PC-9 (cell line): ENCODE measurements at regions of chr17 and their contacts with region 1.

Region 1: DNA sequence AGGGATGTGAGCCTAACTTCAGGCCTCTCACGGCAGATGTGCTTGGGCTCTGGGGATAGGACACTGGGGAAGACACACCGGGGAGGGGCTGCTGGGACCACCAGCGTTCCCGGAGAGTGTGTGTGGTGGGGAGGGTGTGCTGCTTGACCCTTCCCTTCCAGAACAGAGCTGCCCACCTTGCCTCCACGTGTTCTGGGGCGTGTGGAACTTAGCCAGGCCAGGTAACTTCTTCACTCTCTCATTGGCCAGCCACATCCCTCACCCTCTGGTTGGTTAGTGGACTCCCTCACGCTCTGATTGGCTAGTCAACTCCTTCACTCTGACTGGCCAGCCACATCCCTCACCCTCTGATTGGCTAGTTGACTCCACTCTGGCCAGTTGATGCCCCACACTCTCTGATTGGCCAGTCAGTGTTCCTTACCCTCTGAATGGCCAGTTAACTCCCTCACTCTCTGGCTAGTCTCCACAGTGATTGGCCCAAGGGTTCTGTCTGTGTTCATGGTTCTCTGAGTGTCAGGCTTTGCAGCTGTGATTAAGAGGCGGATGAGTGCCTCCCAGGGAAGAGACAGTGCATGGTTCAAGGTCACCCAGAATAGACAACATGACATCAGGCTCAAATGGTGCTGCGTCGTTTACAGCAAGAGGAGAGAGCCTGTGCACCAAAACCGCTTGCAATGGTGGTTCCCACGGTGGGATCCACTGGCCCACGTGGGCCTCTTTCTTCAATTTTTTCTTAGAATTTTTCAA is 10.0 kb downstream of the TMEM235 start:
- DNase-seq: no peak
- H3K4me3 ChIP-seq: no peak overlapping the region
- H3K27ac ChIP-seq: no peak overlapping the region
- H3K4me1 ChIP-seq: no peaks in the 10 kb centered on the region
- H3K27me3 ChIP-seq: no peaks in the 10 kb centered on the region
- CTCF ChIP-seq: no peak

Region 2: GRCh38 chr17:78154903-78155811 is 86.3 kb before region 1 on chr17:
- CTCF ChIA-PET with region 1: no interaction called
- POLR2A ChIA-PET with region 1: no interaction called
- intact Hi-C with region 1: no loop called
- DNase-seq: no peak
- H3K4me3 ChIP-seq: no peak overlapping the region
- H3K27ac ChIP-seq: no peak overlapping the region
- H3K4me1 ChIP-seq: no peaks in the 10 kb centered on the region
- H3K27me3 ChIP-seq: no peaks in the 10 kb centered on the region
- CTCF ChIP-seq: no peak

Region 3: GRCh38 chr17:78202666-78203065 is 38.8 kb before region 1 on chr17:
- CTCF ChIA-PET with region 1: interaction called, 13 read pairs
- POLR2A ChIA-PET with region 1: no interaction called
- intact Hi-C with region 1: no loop called
- DNase-seq: no peak
- H3K4me3 ChIP-seq: no peak overlapping the region
- H3K27ac ChIP-seq: no peak overlapping the region
- H3K4me1 ChIP-seq: no peaks in the 10 kb centered on the region; the same call in 1 of the 2 replicates
- H3K27me3 ChIP-seq: no peaks in the 10 kb centered on the region
- CTCF ChIP-seq: no peak

Region 4: DNA sequence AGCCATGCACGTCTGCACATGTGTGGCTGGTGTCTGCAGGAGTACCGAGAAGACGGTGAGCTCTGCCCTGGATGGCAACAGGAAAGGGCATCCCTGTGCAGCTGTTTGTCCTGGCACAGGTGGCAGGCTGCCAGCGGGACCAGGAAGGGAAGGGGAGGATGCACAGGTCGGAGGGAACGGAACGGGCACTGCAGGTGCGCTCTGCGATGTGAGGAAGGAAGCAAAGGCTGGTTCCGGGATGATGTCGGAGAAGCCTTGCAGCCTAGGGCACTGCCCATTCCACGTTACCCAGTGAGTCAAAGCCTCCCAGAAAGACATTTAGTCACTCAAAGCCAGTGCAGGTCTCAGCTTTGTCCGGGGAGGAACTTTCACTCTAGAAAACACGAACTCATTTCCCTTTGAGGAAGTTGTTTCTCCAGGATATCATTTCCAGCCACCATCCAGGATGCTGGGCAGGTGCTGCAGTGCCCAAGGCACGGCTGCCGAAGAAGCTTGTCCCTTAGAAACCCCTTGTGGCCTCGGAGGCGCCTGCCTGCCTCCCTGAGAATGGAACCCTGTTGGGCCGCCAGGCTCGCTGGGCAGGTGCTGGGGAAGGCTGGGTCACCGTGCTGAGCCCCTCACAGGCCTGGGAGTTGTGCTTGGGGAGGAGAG is 14.6 kb before region 1 on chr17:
- CTCF ChIA-PET with region 1: no interaction called
- POLR2A ChIA-PET with region 1: no interaction called
- intact Hi-C with region 1: no loop called
- DNase-seq: no peak
- H3K4me3 ChIP-seq: no peak overlapping the region
- H3K27ac ChIP-seq: no peak overlapping the region
- H3K4me1 ChIP-seq: no peaks in the 10 kb centered on the region
- H3K27me3 ChIP-seq: no peaks in the 10 kb centered on the region
- CTCF ChIP-seq: no peak

Region 5: DNA sequence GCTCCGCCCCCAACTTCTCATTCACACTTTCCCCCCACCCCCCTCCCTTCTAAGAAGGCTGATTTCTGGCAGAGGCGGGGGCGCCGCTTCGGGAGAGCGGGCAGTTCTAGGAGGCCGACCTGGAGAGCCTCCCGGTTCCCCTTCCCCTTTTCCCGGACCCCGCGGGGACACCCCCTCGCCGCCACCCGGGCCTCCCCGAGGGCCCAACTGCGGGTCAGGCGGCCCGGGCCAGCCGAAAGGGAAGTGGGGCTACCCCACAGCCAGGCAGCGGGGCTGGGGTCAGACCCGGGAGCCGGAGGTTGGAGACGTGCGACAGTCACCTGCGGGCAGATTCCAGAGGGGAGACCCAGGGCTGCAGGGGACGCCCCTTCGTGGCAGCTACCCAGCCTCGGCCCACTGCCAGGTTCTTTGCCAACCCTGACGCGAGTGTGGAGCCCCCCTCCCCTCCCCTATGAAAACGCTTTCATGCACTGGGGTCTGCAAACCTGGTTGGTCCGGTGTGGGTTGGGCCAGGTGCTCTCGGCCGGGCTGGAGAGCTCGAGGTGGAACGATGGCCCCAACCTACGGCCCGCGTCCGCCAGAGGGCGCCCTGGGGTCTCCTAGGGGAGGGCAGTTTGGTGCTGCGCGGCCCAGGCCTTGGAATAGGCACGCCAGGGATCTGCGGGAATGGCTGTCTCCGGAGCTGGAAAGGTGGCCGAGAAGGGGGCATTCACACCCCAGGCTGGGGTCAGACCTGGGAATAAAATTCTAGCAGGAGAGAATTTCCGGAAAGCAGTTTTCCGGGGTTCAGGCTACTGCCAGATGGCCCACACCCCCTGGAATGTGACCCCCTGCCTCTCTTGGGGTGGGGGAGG is 119.1 kb after region 1 on chr17:
- CTCF ChIA-PET with region 1: no interaction called
- POLR2A ChIA-PET with region 1: no interaction called
- intact Hi-C with region 1: no loop called
- DNase-seq: peak; percentile 59 to 95
- H3K4me3 ChIP-seq: peak overlapping the region; percentile 75
- H3K27ac ChIP-seq: peak overlapping the region; percentile 65
- H3K4me1 ChIP-seq: peaks cover 26% of the 10 kb centered on the region
- H3K27me3 ChIP-seq: no peaks in the 10 kb centered on the region
- CTCF ChIP-seq: peak; percentile 87

Region 6: DNA sequence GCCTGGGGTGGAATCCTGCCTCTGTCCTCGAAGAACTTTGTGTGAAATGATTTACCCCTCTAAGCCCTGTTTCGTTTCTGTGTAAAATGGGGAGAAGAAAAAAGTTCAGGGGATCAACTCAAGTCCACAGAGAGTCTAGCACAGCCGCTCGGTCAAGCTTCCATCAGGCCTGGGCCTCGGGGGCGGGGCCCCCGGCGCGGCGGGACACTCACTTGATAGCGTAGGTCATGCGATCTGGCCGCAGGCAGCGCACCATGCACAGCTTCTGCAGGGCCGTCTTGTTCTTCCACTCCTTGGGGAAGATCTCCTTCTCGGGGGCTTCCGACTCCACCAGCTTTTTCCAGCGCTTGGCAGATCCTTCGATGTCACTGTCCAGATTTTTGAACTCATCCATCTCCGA is 202.9 kb after region 1 on chr17:
- CTCF ChIA-PET with region 1: interaction called, 12 read pairs
- POLR2A ChIA-PET with region 1: no interaction called
- intact Hi-C with region 1: no loop called
- DNase-seq: no peak
- H3K4me3 ChIP-seq: no peak overlapping the region
- H3K27ac ChIP-seq: no peak overlapping the region
- H3K4me1 ChIP-seq: no peaks in the 10 kb centered on the region
- H3K27me3 ChIP-seq: no peaks in the 10 kb centered on the region
- CTCF ChIP-seq: no peak